Activated CD8-positive, alpha-beta T cell treated with anti-CD3 and anti-CD28 coated beads, Interleukin-2, amount 10 ng/mL, durations not matched to agents 7 days and 5 days (primary cell): ENCODE measurements at regions of chr6 and their contacts with region 1.

Region 1: GRCh38 chr6:152863618-152864326 is 113.2 kb downstream of the VIP start:
- DNase-seq: peak; percentile 74
- ATAC-seq: peak; percentile 76
- H3K4me3 Mint-ChIP-seq: no peak overlapping the region
- H3K27ac Mint-ChIP-seq: no peak overlapping the region
- H3K4me1 Mint-ChIP-seq: no peaks in the 10 kb centered on the region
- H3K27me3 Mint-ChIP-seq: peaks cover 13% of the 10 kb centered on the region

Region 2: DNA sequence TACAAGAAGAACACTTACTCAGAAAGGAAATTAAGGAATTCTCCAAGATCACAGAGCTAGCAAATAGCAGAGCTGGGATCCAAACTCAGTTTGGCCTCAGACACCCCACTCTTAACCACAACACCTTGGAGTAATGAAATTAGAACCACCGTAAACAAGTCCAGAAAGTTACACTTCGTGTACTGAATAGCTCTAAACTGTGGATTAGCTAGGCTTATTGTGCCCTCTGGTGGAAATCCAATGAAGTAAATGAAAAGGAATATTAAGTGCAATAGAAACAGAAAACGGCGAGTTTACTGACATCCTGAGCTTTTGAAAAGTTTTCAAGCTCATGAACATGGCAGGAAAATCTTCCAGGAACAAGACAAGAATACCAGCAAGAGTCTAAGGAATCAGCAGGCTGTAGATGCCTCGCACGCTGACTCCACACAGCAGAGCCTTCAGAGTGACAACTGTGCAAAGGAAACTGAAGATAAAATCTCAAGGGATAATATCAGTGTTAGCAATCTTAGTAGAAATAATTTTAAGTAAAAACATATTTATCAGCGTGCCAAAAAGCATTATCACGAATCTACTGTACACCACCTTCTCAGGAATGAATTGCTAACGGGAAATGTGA is 84.5 kb after region 1 on chr6:
- CTCF ChIA-PET with region 1: interaction called, 18 read pairs
- POLR2A ChIA-PET with region 1: no interaction called
- DNase-seq: no peak
- ATAC-seq: peak; percentile 60
- H3K4me3 Mint-ChIP-seq: no peak overlapping the region
- H3K27ac Mint-ChIP-seq: no peak overlapping the region
- H3K4me1 Mint-ChIP-seq: peaks cover 7% of the 10 kb centered on the region
- H3K27me3 Mint-ChIP-seq: peaks cover 22% of the 10 kb centered on the region